Cardiac septum (tissue), 1 donor: ENCODE measurements at regions of chr3 and their contacts with region 1.

Region 1: DNA sequence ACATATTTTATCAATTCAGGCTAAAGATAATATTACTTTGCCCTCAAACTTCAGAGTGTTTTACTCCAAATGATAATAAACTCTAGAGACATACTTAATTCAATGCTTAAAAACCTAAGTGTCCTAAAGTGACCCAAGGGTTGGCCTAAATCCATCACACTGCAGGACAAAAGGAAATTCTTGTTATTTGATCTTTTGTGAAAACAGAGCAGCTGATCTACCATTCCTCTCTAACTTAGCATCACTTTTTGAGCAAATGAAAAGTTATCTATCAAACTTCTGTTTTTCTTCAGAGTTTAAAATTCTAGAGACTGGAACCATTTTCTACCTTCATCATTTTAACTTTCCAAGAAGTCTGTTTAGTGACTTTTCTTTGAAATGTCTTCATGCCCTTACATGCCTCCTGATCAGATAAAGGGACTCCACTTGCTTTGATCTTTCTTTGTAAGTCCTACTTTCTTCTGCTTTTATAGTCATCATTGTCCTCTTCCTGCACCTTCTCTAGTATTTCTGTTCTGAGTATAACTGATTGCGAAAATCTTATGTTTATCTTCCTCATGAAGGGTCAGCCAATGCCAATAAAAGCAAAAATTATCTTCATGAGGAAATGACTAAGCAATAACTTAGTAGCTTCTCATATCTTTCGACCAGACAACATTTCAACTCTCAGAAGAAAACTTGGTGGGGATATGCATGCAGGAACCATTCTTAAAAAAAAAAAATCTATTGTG is 378.7 kb upstream of the TGFBR2 start:
- DNase-seq: no peak

Region 2: DNA sequence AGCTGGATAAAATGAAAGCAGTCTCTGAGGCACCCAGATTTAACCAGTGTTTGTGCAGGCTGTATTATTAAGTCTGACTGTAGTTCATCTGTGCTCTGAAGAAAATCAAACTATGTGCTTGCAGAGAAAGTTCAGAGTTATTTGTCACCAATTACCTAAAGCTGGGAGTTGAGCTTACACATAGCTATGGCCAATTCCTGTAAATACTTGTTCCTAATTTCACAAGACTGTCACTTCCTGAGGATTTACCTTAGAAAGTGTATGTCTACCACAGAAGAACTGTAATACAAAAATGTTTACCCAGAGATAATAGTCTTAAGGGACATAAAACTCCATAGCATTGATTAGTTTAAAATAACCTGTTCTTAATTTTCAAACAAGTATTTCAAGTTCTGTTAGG is 249.7 kb before region 1 on chr3:
- intact Hi-C with region 1: no loop called
- DNase-seq: no peak

Region 3: DNA sequence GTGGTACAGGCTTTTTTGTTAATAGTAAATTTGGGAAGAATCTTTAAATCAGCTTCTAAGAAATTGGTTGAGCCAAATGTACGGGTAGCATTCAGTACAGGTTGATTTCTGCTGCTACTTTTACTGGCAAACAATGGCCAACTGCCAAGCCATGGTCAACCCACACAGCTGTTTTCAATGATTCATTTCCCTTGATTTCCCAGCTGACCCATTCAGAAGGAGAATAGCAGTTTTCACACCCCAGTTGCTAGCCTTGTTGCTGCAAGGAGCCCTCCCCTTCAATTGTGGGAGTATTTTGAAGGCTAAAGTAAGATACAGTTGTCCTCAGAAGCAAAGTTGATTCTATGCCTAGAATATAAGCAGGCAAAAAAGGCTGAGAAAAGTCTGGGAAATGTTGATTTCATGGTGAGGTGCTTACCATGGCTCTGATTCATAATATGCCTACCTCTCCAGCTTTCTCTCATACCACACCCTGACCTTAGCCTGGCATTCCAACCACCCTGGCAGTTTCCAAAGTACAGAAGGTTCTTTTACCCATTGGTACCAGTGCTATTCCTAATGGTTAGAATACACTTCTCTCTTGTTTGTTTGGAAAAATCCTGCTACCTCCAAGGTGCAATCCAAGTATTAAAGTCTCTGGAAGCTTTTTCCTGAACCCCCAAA is 58.4 kb after region 1 on chr3:
- intact Hi-C with region 1: loop called (anchors 2 kb)
- DNase-seq: peak; percentile 78

Region 4: DNA sequence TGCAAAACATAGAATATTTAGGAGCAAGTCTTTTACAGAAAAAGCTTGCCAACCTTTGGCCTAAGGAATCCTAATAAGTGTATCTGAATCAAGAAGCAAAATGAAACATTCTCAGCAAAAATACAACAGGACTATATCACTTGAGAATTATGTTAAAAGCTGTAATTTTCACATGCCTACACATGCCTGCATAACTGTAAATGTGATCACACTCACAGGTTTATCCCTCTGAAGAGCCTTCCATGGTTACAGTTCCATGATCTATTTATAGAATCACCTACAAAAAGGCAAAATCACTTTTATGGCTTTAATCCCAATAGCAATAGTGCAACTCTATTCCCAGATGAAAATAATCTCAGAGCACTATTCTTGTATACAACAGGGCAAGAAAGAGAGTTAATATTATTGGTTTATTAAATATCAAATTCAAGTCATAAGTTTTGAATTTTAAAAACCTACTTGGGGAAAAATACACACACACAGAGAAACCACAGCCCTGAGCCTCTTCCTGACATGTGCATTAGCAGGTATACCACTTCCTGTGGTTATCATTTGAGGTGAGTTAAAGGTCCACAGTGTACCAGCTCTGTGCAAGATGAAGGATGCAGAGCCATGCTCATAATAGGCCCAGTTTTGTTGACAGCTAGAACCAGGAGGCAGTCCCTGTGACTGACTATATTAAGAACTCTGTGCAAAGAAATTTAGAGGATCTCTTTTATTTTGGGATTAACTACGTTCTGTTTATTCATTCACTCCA is 126.2 kb after region 1 on chr3:
- intact Hi-C with region 1: loop called (anchors 5 kb)
- DNase-seq: no peak

Region 5: GRCh38 chr3:30437171-30437601 is 209.4 kb after region 1 on chr3:
- intact Hi-C with region 1: loop called (anchors 5 kb)
- DNase-seq: no peak

Region 6: GRCh38 chr3:30548600-30548999 is 320.9 kb after region 1 on chr3:
- intact Hi-C with region 1: loop called (anchors 10 kb)
- DNase-seq: no peak